Thyroid gland (tissue), 4 donors: ENCODE measurements at regions of chr15 and their contacts with region 1.

Region 1: DNA sequence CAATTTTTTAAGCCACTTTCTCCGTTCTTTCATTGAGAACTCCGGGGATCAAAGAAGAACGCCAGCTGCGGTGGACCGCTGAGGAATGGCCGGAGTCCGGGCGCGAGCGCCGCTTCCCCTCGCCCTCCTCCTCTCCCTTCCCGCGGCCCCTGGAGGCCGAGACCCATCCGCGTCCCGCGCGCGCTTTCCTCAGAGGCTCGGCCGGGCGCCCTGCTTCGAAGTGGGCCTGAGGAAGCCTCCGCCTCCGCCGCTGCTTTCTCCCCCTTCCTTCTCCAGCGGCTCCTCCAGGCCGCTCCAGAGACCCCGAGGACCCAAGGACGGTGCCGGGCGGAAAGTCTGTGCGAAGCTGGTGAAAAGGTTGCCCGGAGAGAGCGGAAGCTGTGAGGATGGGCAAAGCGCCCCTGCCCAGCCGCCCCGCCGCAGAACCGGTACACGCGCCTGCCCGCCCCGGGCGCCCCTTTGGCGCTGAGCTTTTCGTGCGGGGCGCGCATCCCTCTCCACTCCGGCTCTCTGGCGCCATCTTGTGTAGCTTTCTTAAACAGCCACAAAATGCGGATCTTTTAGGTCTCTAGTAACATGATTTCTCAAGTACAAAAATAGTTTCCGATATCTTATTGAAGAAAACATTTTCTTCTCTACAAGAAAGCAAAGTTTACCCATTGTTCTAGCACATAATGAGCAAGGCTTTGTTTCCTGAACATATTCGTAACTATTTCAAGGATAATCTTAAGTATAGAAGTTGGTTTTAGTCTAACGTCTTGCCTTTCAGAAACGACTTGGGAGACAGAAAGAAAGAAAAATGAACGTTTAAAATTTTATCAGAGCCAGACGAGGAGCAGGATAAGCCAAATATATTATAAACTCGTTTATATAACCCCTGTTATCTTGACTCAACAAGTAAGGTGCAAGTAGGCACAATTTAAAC is 59.2 kb upstream of the FAM174B start:
- DNase-seq: peak; percentile 79 to 82
- H3K4me3 ChIP-seq: peak overlapping the region in 2 of 3 donors; percentile 44 to 47
- H3K27ac ChIP-seq: peak overlapping the region; percentile 64 to 80 (median 67)
- H3K4me1 ChIP-seq: peaks cover 0 to 4% of the 10 kb centered on the region in 2 donors
- H3K27me3 ChIP-seq: no peaks in the 10 kb centered on the region
- CTCF ChIP-seq: peak; percentile 80 to 90 (median 85)
- POLR2A ChIP-seq: peak in 1 of 2 donors; percentile 58

Region 2: GRCh38 chr15:92097474-92098178 is 617.1 kb before region 1 on chr15:
- intact Hi-C with region 1: loop called (anchors 10 kb)
- DNase-seq: peak; percentile 20 to 40
- H3K4me3 ChIP-seq: no peak overlapping the region
- H3K27ac ChIP-seq: no peak overlapping the region
- H3K4me1 ChIP-seq: no peaks in the 10 kb centered on the region
- H3K27me3 ChIP-seq: no peaks in the 10 kb centered on the region
- CTCF ChIP-seq: peak in 5 of 6 experiments; percentile 27 to 75 (median 49)
- POLR2A ChIP-seq: no peak

Region 3: DNA sequence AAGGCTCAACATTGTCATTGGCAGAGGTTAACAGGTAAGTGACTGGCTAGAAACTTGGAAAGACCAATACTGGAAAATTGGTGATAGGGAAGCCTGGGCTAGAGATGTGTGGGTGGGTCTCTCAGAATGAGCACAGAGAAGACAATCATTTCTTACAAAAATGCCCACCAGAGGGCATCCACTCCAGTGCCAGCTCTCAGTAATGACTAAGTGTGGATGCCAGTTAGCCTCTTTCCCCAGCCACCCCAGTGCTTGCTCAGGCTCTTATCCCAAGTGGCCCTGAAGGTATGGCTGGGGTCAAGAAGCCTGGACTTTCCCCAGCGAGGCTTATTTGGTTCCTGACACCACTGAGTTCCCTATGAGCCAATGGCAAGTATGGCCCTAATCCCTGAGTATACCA is 437.0 kb before region 1 on chr15:
- intact Hi-C with region 1: loop called (anchors 5 kb)
- DNase-seq: peak; percentile 32 to 47
- H3K4me3 ChIP-seq: no peak overlapping the region
- H3K27ac ChIP-seq: no peak overlapping the region
- H3K4me1 ChIP-seq: no peaks in the 10 kb centered on the region
- H3K27me3 ChIP-seq: no peaks in the 10 kb centered on the region
- CTCF ChIP-seq: peak in 3 of 6 experiments; percentile 45 to 54 (median 45)
- POLR2A ChIP-seq: no peak

Region 4: DNA sequence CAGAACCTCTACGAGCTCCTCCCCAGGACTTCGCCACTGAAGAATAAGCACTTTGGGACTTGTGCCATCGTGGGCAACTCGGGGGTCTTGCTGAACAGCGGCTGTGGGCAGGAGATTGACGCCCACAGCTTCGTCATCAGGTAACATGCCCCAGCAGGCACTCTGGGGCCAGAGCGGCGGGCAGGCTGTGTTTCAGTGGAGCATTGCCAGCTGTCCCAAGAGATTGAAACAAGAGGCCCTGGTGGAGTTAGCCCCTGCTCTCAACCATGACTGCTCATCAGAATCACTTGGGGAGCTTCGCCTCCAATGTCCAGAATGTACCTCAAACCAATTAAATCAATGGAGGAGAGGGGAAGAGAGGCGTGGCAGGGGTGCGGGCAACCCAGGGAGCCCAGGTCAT is 276.3 kb before region 1 on chr15:
- intact Hi-C with region 1: no loop called
- DNase-seq: peak; percentile 34 to 49
- H3K4me3 ChIP-seq: no peak overlapping the region
- H3K27ac ChIP-seq: no peak overlapping the region
- H3K4me1 ChIP-seq: peaks cover 0 to 13% of the 10 kb centered on the region in 2 donors
- H3K27me3 ChIP-seq: no peaks in the 10 kb centered on the region
- CTCF ChIP-seq: no peak
- POLR2A ChIP-seq: no peak